ENCODE measurements at regions of chr7 and their contacts with region 1.

Region 1: GRCh38 chr7:31373337-31374289 is 33.1 kb upstream of the NEUROD6 start:
- DNase-seq: peak; percentile 47
- H3K4me3 ChIP-seq: no peak overlapping the region
- H3K27ac ChIP-seq: no peak overlapping the region
- H3K4me1 ChIP-seq: no peaks in the 10 kb centered on the region
- CTCF ChIP-seq: peak; percentile 79

Region 2: GRCh38 chr7:31735991-31736982 is 362.7 kb after region 1 on chr7:
- CTCF ChIA-PET with region 1: no interaction called
- POLR2A ChIA-PET with region 1: no interaction called
- intact Hi-C with region 1: loop called (anchors 10 kb)
- DNase-seq: peak; percentile 30
- H3K4me3 ChIP-seq: no peak overlapping the region
- H3K27ac ChIP-seq: no peak overlapping the region
- H3K4me1 ChIP-seq: no peaks in the 10 kb centered on the region
- CTCF ChIP-seq: peak; percentile 82

Measured in OCI-LY7 (cell line).